ENCODE measurements at regions of chr5 and their contacts with region 1.

Region 1: GRCh38 chr5:139787568-139788293 is 7.9 kb upstream of the PSD2 start:
- DNase-seq: peak; percentile 97
- H3K27ac ChIP-seq: peak overlapping the region; percentile 57
- CTCF ChIP-seq: peak; percentile 96

Region 2: DNA sequence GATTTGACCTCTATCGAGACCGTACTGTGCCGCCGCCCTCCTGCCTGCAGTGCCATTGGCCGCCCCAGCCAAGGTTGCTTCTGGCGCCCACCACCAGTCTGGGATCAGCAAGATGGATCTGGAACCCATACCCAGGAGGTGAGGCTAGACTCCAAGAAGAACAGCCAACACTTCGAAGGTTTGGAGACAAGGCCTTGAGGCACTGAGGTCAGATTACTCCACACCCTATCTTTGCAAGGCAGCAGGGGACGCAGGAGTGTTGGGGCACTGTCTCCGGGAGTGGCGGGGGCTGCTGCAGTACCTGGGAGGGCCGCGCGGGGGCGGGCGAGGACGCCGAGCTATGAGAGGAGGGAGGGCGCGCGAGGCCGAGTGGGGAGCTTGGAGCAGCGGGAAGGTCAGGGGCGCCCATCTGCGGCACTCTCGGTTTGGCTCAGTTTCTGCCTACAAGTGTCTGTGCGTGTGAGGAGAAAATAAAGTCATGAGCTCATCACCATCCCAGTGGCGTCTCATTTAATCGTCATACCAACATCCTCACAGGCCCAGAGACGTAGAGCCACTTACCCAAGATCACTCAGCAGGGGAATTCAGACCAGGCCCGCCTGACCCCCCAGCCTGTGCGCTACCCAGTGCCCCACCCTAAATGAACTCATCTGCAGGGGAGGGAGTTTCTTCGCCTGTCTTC is 12.6 kb before region 1 on chr5:
- CTCF ChIA-PET with region 1: interaction called, 13 read pairs
- POLR2A ChIA-PET with region 1: no interaction called
- DNase-seq: peak; percentile 71
- H3K27ac ChIP-seq: no peak overlapping the region
- CTCF ChIP-seq: peak; percentile 90

Region 3: DNA sequence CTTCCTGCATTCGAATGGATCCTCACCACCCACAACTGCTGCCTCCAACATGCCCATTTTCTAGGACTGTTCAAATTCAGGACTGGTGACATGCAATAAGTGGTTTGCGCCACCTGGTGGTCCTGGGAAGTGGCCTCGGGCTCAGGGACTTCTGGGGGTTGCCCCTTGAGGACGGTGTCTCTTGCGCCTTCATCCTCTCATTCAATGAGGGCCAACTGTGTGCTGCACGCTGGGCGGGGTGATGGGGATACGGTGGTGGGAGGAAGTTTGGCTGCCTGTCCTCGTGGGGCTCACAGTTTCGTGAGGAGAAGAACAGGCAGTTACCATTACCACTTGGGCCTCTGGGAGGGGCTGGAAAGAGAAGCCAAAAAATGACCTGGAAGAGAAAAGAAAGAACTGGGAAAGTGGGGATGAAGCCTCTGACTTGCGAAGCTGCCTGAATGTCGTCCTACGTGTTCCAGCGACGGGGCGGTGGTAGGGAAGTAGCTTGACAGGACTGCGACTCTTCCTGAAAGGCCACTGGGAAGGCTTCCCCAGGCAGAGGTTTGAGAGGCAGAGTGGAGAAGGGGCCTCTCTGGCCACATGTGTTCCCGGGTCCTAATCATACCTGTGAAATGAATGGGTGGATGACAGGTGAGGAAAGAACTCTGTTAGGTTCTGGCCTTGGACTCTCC is 56.9 kb after region 1 on chr5:
- CTCF ChIA-PET with region 1: interaction called, 29 read pairs
- POLR2A ChIA-PET with region 1: no interaction called
- DNase-seq: peak; percentile 71
- H3K27ac ChIP-seq: no peak overlapping the region
- CTCF ChIP-seq: peak; percentile 77

Region 4: DNA sequence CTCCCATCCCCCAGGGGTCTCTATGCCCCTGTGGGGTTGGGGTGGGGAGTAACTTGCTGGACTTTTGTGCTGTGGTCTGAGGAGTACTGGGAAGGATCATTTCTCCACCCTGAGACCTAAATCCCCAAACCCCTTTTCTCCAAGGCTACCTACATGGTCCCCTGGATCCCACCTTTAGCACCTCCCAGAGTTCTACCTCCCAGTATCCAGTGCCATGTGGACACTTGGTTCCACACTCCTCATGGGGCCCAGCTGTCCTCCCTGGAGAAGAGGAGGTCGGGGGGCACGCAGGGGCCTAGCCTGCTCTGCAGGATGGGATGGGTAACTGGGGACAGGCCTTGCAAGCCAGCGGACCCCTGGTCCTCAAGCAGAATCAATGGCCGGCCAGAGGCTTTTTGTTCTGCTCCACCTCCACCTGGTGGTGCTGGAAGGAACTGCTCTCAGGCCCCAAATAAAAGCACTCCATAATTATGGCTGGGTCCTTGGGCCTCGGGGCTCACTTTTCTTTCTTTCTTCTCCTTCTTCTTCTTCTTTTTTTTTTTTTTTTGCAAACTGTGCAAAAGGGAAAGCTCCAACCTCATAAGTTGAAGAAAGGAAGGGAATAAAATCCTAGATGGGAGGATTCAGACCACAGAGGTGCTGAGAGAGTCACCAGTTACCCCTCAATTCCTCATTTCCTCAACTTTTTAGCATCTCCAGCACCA is 76.3 kb after region 1 on chr5:
- CTCF ChIA-PET with region 1: interaction called, 20 read pairs
- POLR2A ChIA-PET with region 1: no interaction called
- DNase-seq: peak; percentile 84
- H3K27ac ChIP-seq: peak overlapping the region; percentile 85
- CTCF ChIP-seq: peak; percentile 91

Region 5: GRCh38 chr5:139994234-139994633 is 206.5 kb after region 1 on chr5:
- CTCF ChIA-PET with region 1: no interaction called
- POLR2A ChIA-PET with region 1: no interaction called
- DNase-seq: no peak
- H3K27ac ChIP-seq: no peak overlapping the region
- CTCF ChIP-seq: no peak